Naive thymus-derived CD4-positive, alpha-beta T cell (primary cell): ENCODE measurements at regions of chr11 and their contacts with region 1.

Region 1: GRCh38 chr11:10413268-10413667 is 41.8 kb upstream of the AMPD3 start:
- DNase-seq: peak in 7 of 9 donors; percentile 35 to 65 (median 57)
- ATAC-seq: peak; percentile 81
- H3K4me3 ChIP-seq: no peak overlapping the region
- H3K4me3 Mint-ChIP-seq: no peak overlapping the region
- H3K27ac ChIP-seq: no peak overlapping the region
- H3K27ac Mint-ChIP-seq: no peak overlapping the region
- H3K4me1 ChIP-seq: peaks cover 12 to 27% of the 10 kb centered on the region in 2 donors
- H3K4me1 Mint-ChIP-seq: peaks cover 29 to 47% (median 39%) of the 10 kb centered on the region in 7 donors
- H3K27me3 ChIP-seq: no peaks in the 10 kb centered on the region
- H3K27me3 Mint-ChIP-seq: peaks cover 0 to 16% (median 0%) of the 10 kb centered on the region in 5 donors

Region 2: DNA sequence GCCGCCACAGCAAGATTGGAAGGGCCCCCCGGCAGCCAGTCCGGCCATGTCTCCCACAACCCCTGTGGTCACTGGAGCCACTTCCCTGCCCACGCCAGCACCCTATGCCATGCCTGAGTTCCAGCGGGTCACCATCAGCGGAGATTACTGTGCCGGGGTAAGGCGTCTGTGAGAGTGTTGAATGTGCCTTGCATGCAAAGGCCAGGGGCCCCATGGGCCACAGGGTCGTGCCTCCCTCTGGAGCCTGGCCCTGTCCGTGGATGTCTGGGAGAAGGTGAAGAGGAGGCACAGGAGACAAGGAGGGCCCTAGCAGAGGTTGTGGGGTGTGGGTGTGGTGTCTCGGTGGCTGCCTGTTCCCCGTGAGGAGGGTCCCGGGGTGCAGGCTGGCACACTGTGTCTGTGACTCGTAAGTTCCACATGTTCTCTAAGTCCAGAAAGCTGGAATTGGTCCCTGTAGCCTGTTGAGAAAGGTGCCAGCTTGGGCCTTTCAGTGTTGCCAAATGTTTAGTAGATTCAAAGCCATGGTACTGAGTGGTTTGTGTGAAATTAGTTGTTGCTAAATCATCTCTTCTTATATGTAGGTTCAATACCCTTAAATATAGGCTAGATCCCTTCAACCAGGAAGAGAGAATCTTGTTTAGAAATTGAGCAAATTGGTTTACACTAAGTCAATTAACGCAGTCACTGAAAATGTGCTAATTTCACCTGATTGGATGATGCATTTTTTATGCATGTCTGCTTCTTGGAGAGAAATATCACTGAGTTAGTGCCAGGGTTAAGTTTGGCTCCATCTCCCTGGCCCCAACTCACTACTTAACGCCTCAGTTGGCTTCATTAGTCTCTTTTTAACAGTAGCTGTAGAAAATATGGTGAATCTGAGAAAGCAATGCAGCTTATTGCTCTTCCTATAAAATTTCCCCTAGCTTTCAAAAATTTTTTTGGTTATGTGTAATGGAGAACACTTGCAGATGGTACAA is 65.6 kb after region 1 on chr11:
- CTCF ChIA-PET with region 1: no interaction called
- POLR2A ChIA-PET with region 1: no interaction called
- intact Hi-C with region 1: loop called in 1 of 2 experiments (anchors 5 kb)
- DNase-seq: no peak
- ATAC-seq: no peak
- H3K4me3 ChIP-seq: no peak overlapping the region
- H3K4me3 Mint-ChIP-seq: no peak overlapping the region
- H3K27ac ChIP-seq: no peak overlapping the region
- H3K27ac Mint-ChIP-seq: peak overlapping the region in 8 of 9 donors; percentile 23 to 67 (median 48)
- H3K4me1 ChIP-seq: no peaks in the 10 kb centered on the region
- H3K4me1 Mint-ChIP-seq: peaks cover 8 to 37% (median 18%) of the 10 kb centered on the region in 7 donors
- H3K27me3 ChIP-seq: no peaks in the 10 kb centered on the region
- H3K27me3 Mint-ChIP-seq: no peaks in the 10 kb centered on the region

Region 3: DNA sequence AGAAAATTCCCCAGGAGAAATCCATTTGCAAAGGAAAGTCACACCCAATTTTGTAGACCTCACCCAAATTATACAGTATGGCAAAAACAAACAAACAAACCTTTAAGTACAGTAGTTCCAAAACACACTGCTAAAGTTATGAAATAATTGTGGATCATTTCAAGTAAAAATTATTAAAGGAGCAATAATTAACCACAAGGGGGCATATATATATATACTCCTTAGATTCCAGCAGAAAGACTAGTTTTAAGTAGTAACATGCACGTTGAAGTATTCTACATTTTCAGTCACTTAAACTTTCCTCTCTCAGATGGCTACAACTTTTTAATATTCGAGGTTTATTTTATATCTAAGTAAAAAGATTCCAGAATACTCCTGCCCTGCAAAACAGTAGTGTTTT is 100.9 kb after region 1 on chr11:
- CTCF ChIA-PET with region 1: interaction called, 4 read pairs
- POLR2A ChIA-PET with region 1: no interaction called
- intact Hi-C with region 1: loop called in 1 of 2 experiments (anchors 5 kb)
- DNase-seq: peak in 1 of 9 donors; percentile 4
- ATAC-seq: no peak
- H3K4me3 ChIP-seq: no peak overlapping the region
- H3K4me3 Mint-ChIP-seq: no peak overlapping the region
- H3K27ac ChIP-seq: no peak overlapping the region
- H3K27ac Mint-ChIP-seq: peak overlapping the region in 3 of 9 donors; percentile 0 to 48 (median 30)
- H3K4me1 ChIP-seq: no peaks in the 10 kb centered on the region
- H3K4me1 Mint-ChIP-seq: peaks cover 0 to 5% (median 0%) of the 10 kb centered on the region in 7 donors
- H3K27me3 ChIP-seq: no peaks in the 10 kb centered on the region
- H3K27me3 Mint-ChIP-seq: no peaks in the 10 kb centered on the region

Region 4: DNA sequence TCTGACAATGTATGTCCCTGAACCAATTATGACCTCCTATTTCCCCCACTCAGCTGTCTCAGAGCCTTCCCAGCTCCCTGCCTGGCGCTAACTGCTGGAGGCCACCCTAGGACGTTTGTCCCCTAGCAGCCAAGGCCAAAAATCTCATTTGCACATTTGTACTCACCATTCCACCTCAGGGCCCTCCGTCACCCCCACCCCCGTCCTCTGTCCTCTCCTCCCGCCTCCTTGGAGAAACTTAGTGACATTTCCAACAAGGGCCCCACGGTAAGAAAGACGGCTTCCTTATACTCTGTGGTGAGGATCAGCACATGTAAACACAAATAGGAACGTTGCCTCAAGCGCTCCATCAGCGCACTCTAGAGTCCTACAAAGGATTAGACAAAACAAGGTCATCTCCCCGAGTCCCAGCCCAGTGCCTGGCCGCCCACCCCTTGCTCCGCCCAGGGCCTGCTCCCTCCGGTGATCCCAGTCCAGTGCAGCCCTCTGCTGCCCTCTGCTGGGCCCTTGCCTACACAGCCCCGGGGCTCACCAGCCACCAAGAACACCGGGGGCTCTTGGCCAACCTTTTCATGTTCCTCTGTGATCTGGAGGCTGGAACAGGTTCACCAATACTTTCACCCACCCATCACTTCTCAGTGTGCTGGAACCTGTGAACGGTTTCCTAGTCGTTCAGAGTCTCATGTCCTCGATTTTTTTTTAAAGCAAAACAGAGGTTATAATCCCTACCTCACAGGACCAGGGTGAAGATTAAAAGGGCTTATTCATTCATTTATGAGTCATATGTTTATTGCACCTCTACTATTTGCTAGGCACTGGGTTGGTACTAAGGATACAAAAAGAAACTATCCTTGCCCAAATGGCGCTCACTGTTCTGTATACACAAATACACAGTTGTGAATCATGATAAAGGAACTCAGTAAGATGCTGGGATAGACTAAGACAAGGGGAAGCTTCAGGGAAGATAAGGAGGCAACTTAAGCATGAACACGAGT is 322.5 kb after region 1 on chr11:
- CTCF ChIA-PET with region 1: interaction called, 10 read pairs
- POLR2A ChIA-PET with region 1: no interaction called
- intact Hi-C with region 1: loop called (anchors 1 kb)
- DNase-seq: peak; percentile 62 to 92 (median 77)
- ATAC-seq: peak; percentile 100
- H3K4me3 ChIP-seq: no peak overlapping the region
- H3K4me3 Mint-ChIP-seq: peak overlapping the region in 8 of 10 donors; percentile 8 to 75 (median 62)
- H3K27ac ChIP-seq: no peak overlapping the region
- H3K27ac Mint-ChIP-seq: peak overlapping the region in 5 of 9 donors; percentile 31 to 71 (median 59)
- H3K4me1 ChIP-seq: peaks cover 0 to 4% of the 10 kb centered on the region in 2 donors
- H3K4me1 Mint-ChIP-seq: peaks cover 5 to 13% (median 8%) of the 10 kb centered on the region in 7 donors
- H3K27me3 ChIP-seq: no peaks in the 10 kb centered on the region
- H3K27me3 Mint-ChIP-seq: peaks cover 4 to 19% (median 12%) of the 10 kb centered on the region in 5 donors